T-cell (primary cell): ENCODE measurements at regions of chr10 and their contacts with region 1.

Region 1: DNA sequence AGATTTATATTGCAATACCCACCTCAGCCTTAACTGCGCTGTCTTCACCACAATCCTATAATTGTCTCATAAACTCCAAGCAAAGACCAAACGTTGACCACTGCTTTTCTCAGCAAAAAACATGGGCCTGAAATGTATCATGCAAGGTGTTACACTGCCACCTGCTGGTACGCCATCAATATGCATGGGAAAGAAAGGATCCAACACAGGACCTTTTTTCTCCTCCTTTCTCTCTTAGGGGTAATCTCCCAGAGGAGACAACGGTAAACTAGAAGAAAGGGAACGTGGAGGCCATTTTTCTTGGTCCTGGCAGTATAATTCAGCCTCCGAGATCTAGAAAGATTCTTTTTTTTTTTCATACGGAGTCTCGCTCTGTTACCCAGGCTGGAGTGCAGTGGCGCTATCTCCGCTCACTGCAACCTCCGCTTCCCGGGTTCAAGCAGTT is 79.1 kb upstream of the MPP7 start:
- DNase-seq: peak; percentile 50 to 93 (median 78)
- ATAC-seq: peak; percentile 75 to 93 (median 82)
- H3K4me3 ChIP-seq: no peak overlapping the region
- H3K4me3 Mint-ChIP-seq: peak overlapping the region in 1 of 3 donors; percentile 2
- H3K27ac ChIP-seq: no peak overlapping the region
- H3K27ac Mint-ChIP-seq: peak overlapping the region; percentile 67 to 82
- H3K4me1 ChIP-seq: peaks cover 11 to 12% of the 10 kb centered on the region in 2 experiments
- H3K4me1 Mint-ChIP-seq: peaks cover 30 to 41% (median 32%) of the 10 kb centered on the region in 3 donors
- H3K27me3 ChIP-seq: peaks cover 0 to 3% of the 10 kb centered on the region in 2 experiments
- H3K27me3 Mint-ChIP-seq: peaks cover 0 to 5% of the 10 kb centered on the region in 2 donors

Region 2: DNA sequence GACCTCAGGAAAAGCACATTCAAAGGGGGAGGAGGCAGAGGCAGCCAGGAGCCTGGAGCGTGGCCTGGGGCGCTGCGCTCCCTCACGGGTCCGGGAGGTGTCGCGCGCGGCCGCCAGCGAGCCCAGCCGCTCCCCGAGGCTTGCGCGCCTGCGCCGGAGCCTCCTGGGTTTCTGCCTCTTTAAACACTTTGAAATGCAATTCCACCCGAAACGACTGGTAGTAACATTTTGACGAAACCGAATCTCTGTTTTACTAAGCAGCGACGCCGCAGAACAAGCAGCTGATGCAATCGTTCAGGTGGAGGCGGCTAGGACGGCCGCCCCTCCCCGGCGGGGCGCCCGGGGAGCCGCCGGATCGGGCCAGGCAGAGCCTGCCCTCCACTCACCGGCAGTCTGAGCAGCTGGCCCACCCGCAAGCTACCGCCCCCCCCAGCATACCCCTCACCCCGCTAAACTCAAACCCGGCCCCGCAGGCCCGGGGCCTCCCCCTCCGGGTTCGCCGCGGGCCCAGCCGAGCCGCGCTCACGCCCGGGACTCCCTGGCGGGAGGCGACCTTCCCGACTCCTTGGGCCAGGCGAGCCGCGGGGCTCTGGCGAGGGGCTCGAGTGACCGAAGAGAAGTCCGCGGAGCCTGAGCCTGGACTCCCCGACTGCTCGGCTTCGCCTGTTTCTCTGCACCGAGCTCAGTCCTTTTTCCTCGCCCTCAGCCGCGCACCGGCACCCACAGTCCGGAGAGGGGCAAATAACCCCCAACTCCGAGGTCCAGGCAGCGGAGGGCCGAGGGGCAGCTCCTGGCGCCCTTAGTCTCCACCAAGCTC is 639.5 kb before region 1 on chr10:
- CTCF ChIA-PET with region 1: interaction called, 3 to 10 read pairs
- POLR2A ChIA-PET with region 1: no interaction called
- DNase-seq: peak; percentile 53 to 79 (median 70)
- ATAC-seq: peak; percentile 86 to 90 (median 88)
- H3K4me3 ChIP-seq: peak overlapping the region; percentile 63 to 94
- H3K4me3 Mint-ChIP-seq: peak overlapping the region; percentile 75 to 82 (median 82)
- H3K27ac ChIP-seq: no peak overlapping the region
- H3K27ac Mint-ChIP-seq: no peak overlapping the region
- H3K4me1 ChIP-seq: peaks cover 21 to 54% of the 10 kb centered on the region in 2 experiments
- H3K4me1 Mint-ChIP-seq: peaks cover 34 to 42% (median 36%) of the 10 kb centered on the region in 3 donors
- H3K27me3 ChIP-seq: peaks cover 17 to 65% of the 10 kb centered on the region in 2 experiments
- H3K27me3 Mint-ChIP-seq: peaks cover 47 to 63% of the 10 kb centered on the region in 2 donors

Region 3: DNA sequence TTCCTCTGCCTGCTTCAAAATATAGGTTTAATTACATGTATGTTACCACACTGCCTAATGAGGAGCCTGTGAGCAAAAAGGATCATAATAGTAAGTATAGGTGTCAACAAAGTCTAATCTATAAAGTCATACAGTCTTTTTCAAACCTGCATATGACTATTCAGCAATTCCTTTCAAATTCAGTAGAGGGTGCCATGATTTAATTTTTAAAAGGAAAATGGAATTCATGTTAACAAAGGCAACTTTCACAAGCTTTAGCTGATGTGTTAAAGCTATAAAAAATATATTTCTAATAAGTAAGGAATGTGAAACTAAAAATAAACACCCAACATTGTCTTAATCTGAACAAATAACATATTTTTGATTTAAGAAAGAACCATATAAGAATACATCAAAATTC is 131.1 kb before region 1 on chr10:
- CTCF ChIA-PET with region 1: interaction called, 39 to 61 read pairs
- POLR2A ChIA-PET with region 1: no interaction called
- DNase-seq: peak in 1 of 35 experiments; percentile 50
- ATAC-seq: peak in 1 of 4 experiments; percentile 54
- H3K4me3 ChIP-seq: no peak overlapping the region
- H3K4me3 Mint-ChIP-seq: no peak overlapping the region
- H3K27ac ChIP-seq: no peak overlapping the region
- H3K27ac Mint-ChIP-seq: no peak overlapping the region
- H3K4me1 ChIP-seq: peaks cover 0 to 9% of the 10 kb centered on the region in 2 experiments
- H3K4me1 Mint-ChIP-seq: peaks cover 40 to 50% (median 43%) of the 10 kb centered on the region in 3 donors
- H3K27me3 ChIP-seq: no peaks in the 10 kb centered on the region
- H3K27me3 Mint-ChIP-seq: no peaks in the 10 kb centered on the region

Region 4: GRCh38 chr10:28334296-28334695 is 47.6 kb before region 1 on chr10:
- CTCF ChIA-PET with region 1: interaction called, 7 to 12 read pairs
- POLR2A ChIA-PET with region 1: interaction called, 5 to 6 read pairs
- DNase-seq: peak in 29 of 35 experiments; percentile 3 to 95 (median 52)
- ATAC-seq: peak; percentile 69 to 78 (median 74)
- H3K4me3 ChIP-seq: peak overlapping the region; percentile 55 to 62
- H3K4me3 Mint-ChIP-seq: peak overlapping the region; percentile 91 to 92 (median 92)
- H3K27ac ChIP-seq: peak overlapping the region; percentile 97
- H3K27ac Mint-ChIP-seq: peak overlapping the region; percentile 99 to 100
- H3K4me1 ChIP-seq: peaks cover 33 to 61% of the 10 kb centered on the region in 2 experiments
- H3K4me1 Mint-ChIP-seq: peaks cover 64 to 84% (median 67%) of the 10 kb centered on the region in 3 donors
- H3K27me3 ChIP-seq: no peaks in the 10 kb centered on the region
- H3K27me3 Mint-ChIP-seq: no peaks in the 10 kb centered on the region

Region 5: DNA sequence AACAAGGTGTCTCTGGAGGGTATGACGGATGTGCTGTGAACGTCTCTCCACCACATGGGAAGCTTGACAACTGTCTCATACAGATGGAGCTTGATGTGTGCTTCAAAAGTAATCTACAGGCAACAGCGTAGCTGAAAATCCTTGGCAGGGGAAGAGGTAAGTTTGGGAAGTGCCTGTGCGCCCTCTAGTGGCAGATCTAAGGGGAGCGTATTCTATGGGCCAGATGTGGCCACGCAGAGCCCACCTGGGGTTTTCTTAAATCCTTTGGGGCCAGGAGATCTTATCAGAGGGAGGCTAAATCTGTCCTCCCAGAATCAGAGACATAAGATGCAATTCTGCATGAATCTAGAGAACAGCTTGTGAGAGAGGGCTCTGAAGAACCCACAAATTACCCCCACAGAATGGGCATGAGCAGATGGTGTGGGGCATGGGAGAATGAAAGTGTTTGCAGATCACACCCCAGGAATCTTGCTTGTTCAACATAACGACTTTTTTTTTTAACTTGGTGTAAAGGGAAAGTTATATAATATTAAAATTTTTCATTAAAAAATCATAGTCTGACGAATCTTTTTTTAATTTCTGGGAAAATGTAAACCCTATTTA is 12.1 kb after region 1 on chr10:
- CTCF ChIA-PET with region 1: interaction called, 9 to 20 read pairs
- POLR2A ChIA-PET with region 1: no interaction called
- DNase-seq: peak; percentile 3 to 83 (median 53)
- ATAC-seq: peak; percentile 75 to 87 (median 76)
- H3K4me3 ChIP-seq: no peak overlapping the region
- H3K4me3 Mint-ChIP-seq: no peak overlapping the region
- H3K27ac ChIP-seq: no peak overlapping the region
- H3K27ac Mint-ChIP-seq: no peak overlapping the region
- H3K4me1 ChIP-seq: peaks cover 0 to 4% of the 10 kb centered on the region in 2 experiments
- H3K4me1 Mint-ChIP-seq: peaks cover 4 to 7% (median 5%) of the 10 kb centered on the region in 3 donors
- H3K27me3 ChIP-seq: peaks cover 0 to 2% of the 10 kb centered on the region in 2 experiments
- H3K27me3 Mint-ChIP-seq: peaks cover 2 to 4% of the 10 kb centered on the region in 2 donors